MCF 10A (cell line): ENCODE measurements at regions of chr18 and their contacts with region 1.

Region 1: GRCh38 chr18:35407871-35408481 is 30.8 kb upstream of the ZNF396 start:
- DNase-seq: peak; percentile 88
- H3K4me3 Mint-ChIP-seq: no peak overlapping the region
- H3K27ac Mint-ChIP-seq: no peak overlapping the region
- H3K4me1 Mint-ChIP-seq: peaks cover 35% of the 10 kb centered on the region
- H3K27me3 Mint-ChIP-seq: no peaks in the 10 kb centered on the region
- CTCF ChIP-seq: peak; percentile 67

Region 2: GRCh38 chr18:35459005-35459441 is 51.0 kb after region 1 on chr18:
- CTCF ChIA-PET with region 1: interaction called, 7 read pairs
- POLR2A ChIA-PET with region 1: interaction called, 26 read pairs
- intact Hi-C with region 1: loop called (anchors 5 kb)
- DNase-seq: peak; percentile 74
- H3K4me3 Mint-ChIP-seq: no peak overlapping the region
- H3K27ac Mint-ChIP-seq: peak overlapping the region; percentile 72
- H3K4me1 Mint-ChIP-seq: peaks cover 73% of the 10 kb centered on the region
- H3K27me3 Mint-ChIP-seq: no peaks in the 10 kb centered on the region
- CTCF ChIP-seq: no peak

Region 3: GRCh38 chr18:35497370-35498197 is 89.6 kb after region 1 on chr18 and contains the start of gene INO80C:
- CTCF ChIA-PET with region 1: interaction called, 3 read pairs
- POLR2A ChIA-PET with region 1: interaction called, 19 read pairs
- intact Hi-C with region 1: loop called (anchors 1 kb)
- DNase-seq: peak; percentile 95
- H3K4me3 Mint-ChIP-seq: peak within 1 kb of the TSS; percentile 87
- H3K27ac Mint-ChIP-seq: peak within 1 kb of the TSS; percentile 97
- H3K4me1 Mint-ChIP-seq: peaks cover 34% of the 10 kb centered on the region
- H3K27me3 Mint-ChIP-seq: no peaks in the 10 kb centered on the region
- CTCF ChIP-seq: no peak
- total RNA-seq, gene INO80C: 25.8 and 32.6 TPM in 2 replicates

Region 4: GRCh38 chr18:35580701-35581539 is 172.9 kb after region 1 on chr18:
- CTCF ChIA-PET with region 1: no interaction called
- POLR2A ChIA-PET with region 1: interaction called, 3 read pairs
- intact Hi-C with region 1: loop called (anchors 2 kb)
- DNase-seq: peak; percentile 55
- H3K4me3 Mint-ChIP-seq: peak overlapping the region; percentile 72
- H3K27ac Mint-ChIP-seq: no peak overlapping the region
- H3K4me1 Mint-ChIP-seq: peaks cover 23% of the 10 kb centered on the region
- H3K27me3 Mint-ChIP-seq: no peaks in the 10 kb centered on the region
- CTCF ChIP-seq: no peak

Region 5: GRCh38 chr18:35661483-35662146 is 253.6 kb after region 1 on chr18:
- CTCF ChIA-PET with region 1: interaction called, 4 read pairs
- POLR2A ChIA-PET with region 1: no interaction called
- intact Hi-C with region 1: loop called (anchors 2 kb)
- DNase-seq: peak; percentile 2
- H3K4me3 Mint-ChIP-seq: no peak overlapping the region
- H3K27ac Mint-ChIP-seq: no peak overlapping the region
- H3K4me1 Mint-ChIP-seq: no peaks in the 10 kb centered on the region
- H3K27me3 Mint-ChIP-seq: no peaks in the 10 kb centered on the region
- CTCF ChIP-seq: no peak

Region 6: DNA sequence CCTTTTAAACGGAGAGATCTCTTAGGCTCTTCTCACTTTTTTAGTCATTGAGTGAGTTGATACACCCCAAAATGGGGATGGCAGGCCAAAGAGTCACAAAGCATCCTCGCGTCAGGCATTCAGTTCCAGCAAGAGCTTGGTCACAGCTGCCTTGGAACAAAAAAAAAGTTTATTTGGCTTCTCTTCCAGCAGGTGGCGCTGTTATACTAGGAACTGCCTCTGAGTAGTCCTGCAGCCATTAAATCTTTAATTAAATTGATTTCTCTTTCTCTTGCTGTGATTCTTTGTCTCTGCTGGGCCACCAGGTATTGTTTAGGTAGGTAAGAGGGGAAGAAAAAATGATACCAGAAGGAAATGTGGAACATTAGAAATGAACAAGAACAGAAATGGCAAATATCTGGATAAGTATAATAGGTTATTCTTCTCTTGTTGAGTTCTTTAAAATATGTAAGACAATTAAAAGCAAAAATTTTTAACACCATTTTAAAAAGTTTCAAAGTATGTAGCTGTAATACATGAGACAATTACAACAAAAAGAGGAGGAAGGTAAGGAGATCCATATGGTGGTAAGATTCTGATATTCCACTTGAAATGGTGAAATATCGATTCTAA is 348.6 kb after region 1 on chr18:
- CTCF ChIA-PET with region 1: no interaction called
- POLR2A ChIA-PET with region 1: no interaction called
- intact Hi-C with region 1: loop called (anchors 2 kb)
- DNase-seq: peak; percentile 68
- H3K4me3 Mint-ChIP-seq: no peak overlapping the region
- H3K27ac Mint-ChIP-seq: no peak overlapping the region
- H3K4me1 Mint-ChIP-seq: no peaks in the 10 kb centered on the region
- H3K27me3 Mint-ChIP-seq: peaks cover 18% of the 10 kb centered on the region
- CTCF ChIP-seq: peak; percentile 81